Transverse colon (tissue), 4 donors: ENCODE measurements at regions of chr18 and their contacts with region 1.

Region 1: GRCh38 chr18:43620936-43621335 is 343.6 kb upstream of the SYT4 start:
- DNase-seq: no peak
- H3K4me3 ChIP-seq: no peak overlapping the region
- H3K27ac ChIP-seq: no peak overlapping the region
- H3K4me1 ChIP-seq: no peaks in the 10 kb centered on the region
- H3K27me3 ChIP-seq: no peaks in the 10 kb centered on the region
- CTCF ChIP-seq: peak; percentile 34 to 56 (median 49)
- EP300 ChIP-seq: no peak
- POLR2A ChIP-seq: no peak

Region 2: DNA sequence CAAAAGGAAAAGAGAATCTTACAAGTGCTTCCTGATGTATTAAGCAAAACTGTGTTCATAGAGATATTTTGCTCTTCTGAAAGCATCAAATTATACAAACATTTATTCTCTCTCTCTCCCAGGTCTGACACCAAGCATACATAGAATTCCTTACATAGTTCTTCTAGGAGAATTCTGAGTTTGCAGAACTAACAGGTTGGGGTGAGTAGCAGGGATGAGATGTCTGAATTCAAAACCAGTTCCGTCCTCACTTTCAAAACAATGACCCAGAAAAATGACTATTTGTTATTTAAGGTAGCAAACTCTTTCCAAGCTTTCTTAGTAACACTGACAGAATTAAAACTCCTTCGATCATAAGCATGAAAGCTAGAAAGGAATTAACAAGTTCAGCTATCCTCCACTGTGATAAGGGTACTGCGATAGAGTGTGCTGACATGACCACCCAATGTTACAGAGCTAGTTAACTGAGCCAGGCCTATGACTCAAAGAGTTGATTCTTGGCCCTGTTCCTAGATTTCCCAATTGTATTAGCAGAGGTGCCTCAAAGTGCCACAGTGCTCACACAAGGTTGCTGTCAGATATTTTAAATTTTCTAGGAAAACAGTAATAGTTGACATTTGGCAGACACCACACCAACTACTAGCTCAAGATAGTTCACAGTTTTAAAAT is 974.0 kb after region 1 on chr18:
- in situ Hi-C with region 1: no loop called
- intact Hi-C with region 1: no loop called
- DNase-seq: no peak
- H3K4me3 ChIP-seq: no peak overlapping the region
- H3K27ac ChIP-seq: no peak overlapping the region
- H3K4me1 ChIP-seq: peaks cover 0 to 17% (median 4%) of the 10 kb centered on the region in 4 donors
- H3K27me3 ChIP-seq: no peaks in the 10 kb centered on the region
- CTCF ChIP-seq: no peak
- EP300 ChIP-seq: no peak
- POLR2A ChIP-seq: no peak

Region 3: GRCh38 chr18:45384137-45384961 is 1763.4 kb after region 1 on chr18:
- in situ Hi-C with region 1: loop called in 2 of 4 experiments (anchors 25 kb)
- intact Hi-C with region 1: no loop called
- DNase-seq: peak; percentile 54
- H3K4me3 ChIP-seq: no peak overlapping the region
- H3K27ac ChIP-seq: no peak overlapping the region
- H3K4me1 ChIP-seq: peaks cover 0 to 3% (median 0%) of the 10 kb centered on the region in 4 donors
- H3K27me3 ChIP-seq: no peaks in the 10 kb centered on the region
- CTCF ChIP-seq: peak; percentile 53 to 73 (median 66)
- EP300 ChIP-seq: no peak
- POLR2A ChIP-seq: no peak